Activated CD4-positive, alpha-beta memory T cell treated with anti-CD3 and anti-CD28 coated beads for 36 hours (primary cell): ENCODE measurements at regions of chr7 and their contacts with region 1.

Region 1: GRCh38 chr7:42931834-42932651 is at the starts of genes MRPL32 and PSMA2:
- DNase-seq: peak; percentile 96
- H3K4me3 Mint-ChIP-seq: peak within 1 kb of the TSS; percentile 100
- H3K27ac Mint-ChIP-seq: peak within 1 kb of the TSS; percentile 100
- H3K4me1 Mint-ChIP-seq: peaks cover 60% of the 10 kb centered on the region
- H3K27me3 Mint-ChIP-seq: no peaks in the 10 kb centered on the region
- total RNA-seq, gene MRPL32: 59.3 to 63.6 TPM
- total RNA-seq, gene PSMA2: 196 to 200 TPM

Region 2: GRCh38 chr7:41881331-41882130 is 1050.5 kb before region 1 on chr7:
- CTCF ChIA-PET with region 1: no interaction called
- POLR2A ChIA-PET with region 1: no interaction called
- intact Hi-C with region 1: loop called (anchors 1 kb)
- DNase-seq: peak; percentile 91
- H3K4me3 Mint-ChIP-seq: peak overlapping the region; percentile 43
- H3K27ac Mint-ChIP-seq: peak overlapping the region; percentile 93
- H3K4me1 Mint-ChIP-seq: peaks cover 38% of the 10 kb centered on the region
- H3K27me3 Mint-ChIP-seq: peaks cover 1% of the 10 kb centered on the region

Region 3: DNA sequence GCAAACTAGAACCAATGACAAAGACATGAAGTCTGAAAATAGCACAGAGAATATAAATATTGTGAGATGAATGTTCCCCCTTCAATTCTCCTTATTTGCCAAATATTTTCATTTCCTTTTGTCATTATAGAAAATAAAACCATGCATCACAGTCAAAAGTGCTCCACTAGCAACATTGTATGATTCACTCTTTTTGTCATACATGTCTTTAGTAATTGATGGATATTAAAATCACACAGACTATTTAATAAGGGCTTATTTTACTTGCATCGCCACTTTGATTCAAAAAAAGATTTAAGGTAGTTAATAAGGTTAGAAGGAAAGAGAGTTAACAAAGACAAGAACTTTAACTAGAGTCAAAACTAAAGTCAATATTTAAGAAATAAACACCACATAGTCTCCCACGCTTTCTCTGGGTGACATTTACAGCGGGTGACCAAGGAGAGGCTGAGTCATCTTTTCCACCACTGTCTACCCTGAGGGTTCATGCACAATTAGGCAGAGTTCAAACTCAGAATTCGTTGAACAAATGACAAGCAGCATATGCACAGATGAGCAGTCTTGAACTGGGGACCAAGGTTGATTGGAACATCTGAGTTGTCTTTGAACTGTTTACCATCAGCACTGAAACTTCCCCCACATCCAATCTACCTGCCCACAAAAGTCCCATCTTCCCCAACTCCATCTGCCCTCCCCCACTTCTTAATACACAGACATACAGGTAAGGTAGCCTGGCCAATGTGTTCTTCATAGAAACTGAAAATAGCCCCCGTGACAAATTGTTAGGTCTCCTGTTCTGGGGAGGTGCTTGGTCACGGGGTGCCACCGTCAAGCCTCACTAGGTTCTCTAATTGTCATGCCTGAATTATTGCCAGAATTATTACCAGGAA is 62.7 kb before region 1 on chr7:
- CTCF ChIA-PET with region 1: no interaction called
- POLR2A ChIA-PET with region 1: no interaction called
- intact Hi-C with region 1: loop called (anchors 2 kb)
- DNase-seq: peak; percentile 77
- H3K4me3 Mint-ChIP-seq: peak overlapping the region; percentile 27
- H3K27ac Mint-ChIP-seq: peak overlapping the region; percentile 69
- H3K4me1 Mint-ChIP-seq: peaks cover 24% of the 10 kb centered on the region
- H3K27me3 Mint-ChIP-seq: peaks cover 19% of the 10 kb centered on the region

Region 4: GRCh38 chr7:42911454-42912447 is 20.3 kb before region 1 on chr7 and contains the start of gene C7orf25:
- CTCF ChIA-PET with region 1: interaction called, 7 read pairs
- POLR2A ChIA-PET with region 1: interaction called, 11 read pairs
- intact Hi-C with region 1: loop called (anchors 1 kb)
- DNase-seq: peak; percentile 97
- H3K4me3 Mint-ChIP-seq: peak within 1 kb of the TSS; percentile 94
- H3K27ac Mint-ChIP-seq: peak within 1 kb of the TSS; percentile 79
- H3K4me1 Mint-ChIP-seq: peaks cover 52% of the 10 kb centered on the region
- H3K27me3 Mint-ChIP-seq: no peaks in the 10 kb centered on the region
- total RNA-seq, gene C7orf25: 3.6 to 4.3 TPM

Region 5: DNA sequence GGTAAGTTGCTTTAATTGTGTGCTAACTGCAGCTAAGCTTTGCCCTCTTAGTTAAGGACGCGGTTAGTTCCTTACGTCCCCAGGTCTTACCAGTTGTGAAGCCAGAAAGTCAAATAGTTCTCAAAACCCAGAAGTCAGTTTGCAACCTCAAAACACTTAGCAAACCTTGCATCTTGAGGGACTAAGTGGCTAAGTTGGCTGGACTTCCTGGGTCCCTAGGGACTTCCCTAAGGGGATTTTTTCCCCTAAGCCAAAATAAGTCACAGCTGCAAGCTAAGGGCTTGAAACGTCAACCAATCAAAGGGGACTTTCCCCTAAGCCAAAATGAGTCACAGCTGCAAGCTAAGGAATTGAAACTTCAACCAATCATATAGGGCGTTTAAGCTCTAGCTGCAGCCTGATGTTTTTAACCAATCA is 144.2 kb after region 1 on chr7:
- CTCF ChIA-PET with region 1: no interaction called
- POLR2A ChIA-PET with region 1: no interaction called
- intact Hi-C with region 1: loop called (anchors 5 kb)
- DNase-seq: peak; percentile 42
- H3K4me3 Mint-ChIP-seq: no peak overlapping the region
- H3K27ac Mint-ChIP-seq: no peak overlapping the region
- H3K4me1 Mint-ChIP-seq: peaks cover 4% of the 10 kb centered on the region
- H3K27me3 Mint-ChIP-seq: peaks cover 23% of the 10 kb centered on the region

Region 6: DNA sequence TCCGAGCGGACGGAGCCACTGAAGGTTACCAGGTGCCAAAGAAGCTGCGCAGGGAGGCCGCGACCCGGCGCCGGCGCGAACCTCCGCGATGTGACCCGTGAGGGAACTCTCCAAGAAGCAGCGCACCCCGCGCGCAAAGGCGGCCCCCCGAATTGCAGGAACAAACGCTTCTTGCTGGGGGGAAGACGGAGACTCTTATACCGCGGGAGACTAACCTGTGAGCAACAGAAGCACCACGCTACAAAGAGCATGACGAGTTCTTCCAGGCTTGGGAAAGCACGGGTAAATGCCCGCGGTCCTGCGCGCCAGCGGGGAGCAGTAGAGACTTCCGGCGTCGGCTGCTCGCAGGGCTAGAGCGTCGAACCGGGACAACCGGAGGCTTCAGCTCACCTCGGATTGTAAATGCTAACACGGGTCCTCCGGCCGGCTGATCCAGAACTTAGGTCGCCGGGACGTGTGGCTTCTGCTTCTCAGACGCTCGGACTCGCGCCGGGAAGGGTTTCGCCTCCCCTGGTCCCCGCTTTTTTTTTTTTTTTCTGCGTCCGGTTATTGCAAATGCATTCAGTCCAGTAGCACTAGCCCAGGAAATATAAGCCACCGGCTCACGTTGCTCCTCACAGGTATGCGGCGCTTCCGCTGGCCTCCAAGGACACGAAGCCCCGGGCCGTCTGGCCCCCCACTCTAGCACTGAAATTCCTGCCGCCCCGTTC is 797.3 kb after region 1 on chr7 and contains the start of gene COA1:
- CTCF ChIA-PET with region 1: no interaction called
- POLR2A ChIA-PET with region 1: no interaction called
- intact Hi-C with region 1: loop called (anchors 10 kb)
- DNase-seq: peak; percentile 89
- H3K4me3 Mint-ChIP-seq: peak within 1 kb of the TSS; percentile 94
- H3K27ac Mint-ChIP-seq: peak within 1 kb of the TSS; percentile 79
- H3K4me1 Mint-ChIP-seq: peaks cover 32% of the 10 kb centered on the region
- H3K27me3 Mint-ChIP-seq: no peaks in the 10 kb centered on the region
- total RNA-seq, gene COA1: 78.9 to 79.6 TPM

Region 7: GRCh38 chr7:43834463-43835251 is 902.6 kb after region 1 on chr7:
- CTCF ChIA-PET with region 1: interaction called, 7 read pairs
- POLR2A ChIA-PET with region 1: no interaction called
- intact Hi-C with region 1: loop called (anchors 5 kb)
- DNase-seq: peak; percentile 64
- H3K4me3 Mint-ChIP-seq: peak overlapping the region; percentile 77
- H3K27ac Mint-ChIP-seq: peak overlapping the region; percentile 65
- H3K4me1 Mint-ChIP-seq: peaks cover 31% of the 10 kb centered on the region
- H3K27me3 Mint-ChIP-seq: no peaks in the 10 kb centered on the region